ENCODE measurements at regions of chr2 and their contacts with region 1.

Region 1: GRCh38 chr2:43484323-43484930 is 111.4 kb downstream of the THADA start:
- ATAC-seq: peak in 4 of 8 experiments; percentile 47 to 58 (median 52)
- H3K4me3 ChIP-seq: no peak overlapping the region
- H3K27ac ChIP-seq: no peak overlapping the region
- H3K4me1 ChIP-seq: peaks cover 0 to 3% of the 10 kb centered on the region in 2 donors

Region 2: DNA sequence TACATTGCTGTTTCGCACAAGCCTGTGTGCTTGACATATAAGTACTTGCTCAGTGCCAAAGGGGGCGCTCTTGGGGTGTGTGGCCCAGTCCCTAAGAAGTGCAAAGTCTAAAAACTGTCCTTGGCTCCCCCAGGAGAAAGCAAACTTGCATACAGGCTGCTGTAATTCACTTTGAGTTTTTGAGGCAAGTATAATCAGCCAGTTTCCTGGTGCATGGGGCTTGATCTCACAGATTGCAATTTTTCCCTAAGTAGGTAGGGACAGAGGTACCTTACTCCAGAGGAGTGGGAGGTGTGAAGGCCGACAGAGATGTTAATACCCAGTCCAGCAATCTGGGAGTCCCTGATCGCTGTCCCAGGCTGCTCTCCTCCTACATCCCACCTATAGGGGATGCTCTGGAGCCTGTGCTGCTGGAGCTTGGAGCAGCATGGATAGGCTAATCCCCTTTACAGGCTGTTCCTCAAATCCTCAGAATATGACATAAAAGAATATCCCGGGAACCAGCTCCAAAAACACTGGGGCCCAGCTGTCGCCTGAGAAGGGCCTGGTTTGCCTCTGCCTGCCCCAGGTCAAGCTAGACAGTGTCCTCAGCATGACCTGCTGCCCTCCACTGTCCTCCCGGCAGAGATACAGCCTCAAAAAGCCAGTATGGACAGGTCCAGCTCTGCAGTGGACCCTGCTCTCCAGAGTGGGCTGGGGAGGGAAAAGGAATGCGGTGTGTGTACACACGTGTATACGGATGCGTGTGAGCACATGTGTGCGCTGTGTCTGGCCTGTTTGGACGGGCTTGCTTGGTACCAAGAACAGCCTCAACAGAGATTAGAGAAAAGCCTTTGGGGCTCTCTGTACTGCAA is 555.5 kb before region 1 on chr2:
- in situ Hi-C with region 1: loop called in 2 of 9 experiments (anchors 25 kb)
- ATAC-seq: peak in 6 of 8 experiments; percentile 7 to 45 (median 30)
- H3K4me3 ChIP-seq: no peak overlapping the region
- H3K27ac ChIP-seq: peak overlapping the region in 1 of 2 donors; percentile 71
- H3K4me1 ChIP-seq: peaks cover 60 to 66% of the 10 kb centered on the region in 2 donors

Region 3: DNA sequence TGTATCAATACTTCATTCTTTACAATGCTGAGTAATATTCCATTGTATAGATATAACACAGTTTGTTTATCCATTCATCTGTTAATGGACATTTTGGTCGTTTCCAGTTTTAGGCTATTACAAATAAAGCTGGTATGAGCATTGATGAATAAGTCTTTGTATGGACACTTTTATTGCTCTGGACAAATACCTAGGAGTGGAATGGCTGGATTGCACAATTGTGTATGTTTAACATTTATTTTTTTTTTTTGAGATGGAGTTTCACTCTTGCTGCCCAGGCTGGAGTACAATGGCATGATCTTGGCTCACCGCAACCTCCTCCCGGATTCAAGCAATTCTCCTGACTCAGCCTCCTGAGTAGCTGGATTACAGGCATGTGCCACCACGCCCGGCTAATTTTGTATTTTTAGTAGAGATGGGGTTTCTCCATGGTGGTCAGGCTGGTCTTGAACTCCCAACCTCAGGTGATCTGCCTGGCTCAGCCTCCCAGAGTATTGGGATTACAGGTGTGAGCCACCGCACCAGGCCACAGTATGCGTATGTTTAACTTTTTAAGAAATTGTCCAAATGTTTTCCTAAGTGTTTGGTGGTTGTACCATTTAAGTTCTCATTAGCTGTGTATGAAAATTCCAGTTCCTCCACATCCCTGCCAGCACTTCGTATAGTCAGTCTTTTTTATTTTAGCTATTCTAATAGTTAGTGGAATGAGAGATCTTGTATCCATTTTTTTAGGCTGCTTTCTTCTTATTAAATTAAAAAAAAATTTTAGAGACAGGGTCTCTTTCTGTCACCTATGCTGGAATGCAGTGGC is 497.1 kb before region 1 on chr2:
- in situ Hi-C with region 1: no loop called
- ATAC-seq: peak in 2 of 8 experiments; percentile 28 to 50
- H3K4me3 ChIP-seq: no peak overlapping the region
- H3K27ac ChIP-seq: no peak overlapping the region
- H3K4me1 ChIP-seq: peaks cover 0 to 10% of the 10 kb centered on the region in 2 donors

Region 4: GRCh38 chr2:43131024-43131889 is 353.2 kb before region 1 on chr2:
- in situ Hi-C with region 1: loop called in 1 of 9 experiments (anchors 25 kb)
- ATAC-seq: peak; percentile 14 to 95 (median 54)
- H3K4me3 ChIP-seq: no peak overlapping the region
- H3K27ac ChIP-seq: no peak overlapping the region
- H3K4me1 ChIP-seq: peaks cover 4 to 15% of the 10 kb centered on the region in 2 donors

Region 5: DNA sequence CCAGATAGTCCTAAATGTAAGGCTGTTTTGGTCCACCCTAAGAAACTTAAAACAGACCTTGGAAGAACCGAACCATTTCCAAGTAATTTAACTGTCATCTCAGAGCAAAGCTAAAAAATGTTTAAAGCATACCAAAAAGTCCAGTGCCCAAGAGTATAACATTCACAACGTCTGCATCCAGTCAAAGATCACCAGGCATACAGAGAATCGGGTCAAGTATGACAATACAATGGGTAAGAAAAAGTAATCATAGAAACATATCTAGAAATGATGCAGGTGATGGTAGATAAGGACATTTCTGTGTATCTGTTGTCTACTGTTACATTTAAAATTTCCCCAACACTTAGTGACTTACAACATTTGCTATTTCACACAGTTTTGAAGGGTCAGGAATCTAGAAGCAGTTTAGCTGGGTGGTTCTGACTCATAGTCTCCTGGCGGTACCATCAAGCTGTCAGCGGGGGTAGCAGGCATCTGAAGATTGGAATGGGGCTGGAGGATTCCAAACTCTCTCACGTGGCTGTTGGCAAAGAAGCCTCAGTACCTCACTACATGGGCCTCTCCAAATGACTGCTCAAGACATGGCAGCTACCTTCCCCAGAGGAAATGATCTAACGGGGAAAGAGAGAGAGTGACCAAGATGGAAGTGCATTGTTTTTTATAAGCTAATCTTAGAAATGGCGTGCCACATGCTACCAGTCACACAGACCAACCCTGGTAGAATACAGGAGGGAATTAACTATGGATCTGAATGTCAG is 252.8 kb after region 1 on chr2:
- in situ Hi-C with region 1: no loop called
- ATAC-seq: no peak
- H3K4me3 ChIP-seq: no peak overlapping the region
- H3K27ac ChIP-seq: no peak overlapping the region
- H3K4me1 ChIP-seq: peaks cover 0 to 4% of the 10 kb centered on the region in 2 donors